ENCODE measurements at regions of chr18 and their contacts with region 1.

Region 1: DNA sequence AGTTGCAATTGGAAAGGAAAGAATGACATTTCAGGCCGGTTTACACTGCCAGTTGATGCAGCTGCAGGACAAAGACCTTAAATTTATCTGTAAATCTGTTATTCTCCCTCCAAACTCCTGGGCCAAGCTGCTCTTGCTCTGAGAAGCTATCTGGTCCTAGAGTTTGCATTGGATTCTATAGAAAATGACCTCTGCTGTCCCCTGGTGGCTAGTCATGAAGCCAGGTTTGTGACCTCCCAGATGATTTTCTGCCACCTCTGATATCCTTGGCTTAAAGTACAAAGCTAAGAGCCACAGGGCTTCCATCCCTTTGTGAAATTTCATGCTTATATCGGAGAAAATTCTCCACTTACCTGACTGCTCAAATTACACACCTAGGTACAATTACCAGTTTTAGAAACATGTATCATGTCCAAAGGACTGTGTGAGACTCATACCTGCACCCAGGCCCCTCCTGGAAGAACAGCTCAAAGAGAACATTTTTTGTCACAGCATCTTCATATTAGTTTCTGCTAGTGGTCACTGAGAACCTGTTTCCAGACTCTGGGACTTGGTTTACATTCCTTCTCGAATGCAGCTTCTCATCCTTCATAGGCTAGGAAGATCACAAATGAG is 28.9 kb upstream of the IER3IP1 start:
- DNase-seq: peak; percentile 29
- H3K4me3 Mint-ChIP-seq: no peak overlapping the region
- H3K27ac Mint-ChIP-seq: no peak overlapping the region
- H3K4me1 Mint-ChIP-seq: no peaks in the 10 kb centered on the region
- H3K27me3 Mint-ChIP-seq: peaks cover 16% of the 10 kb centered on the region

Region 2: GRCh38 chr18:46711444-46711863 is 493.6 kb before region 1 on chr18:
- CTCF ChIA-PET with region 1: no interaction called
- POLR2A ChIA-PET with region 1: no interaction called
- DNase-seq: no peak
- H3K4me3 Mint-ChIP-seq: no peak overlapping the region
- H3K27ac Mint-ChIP-seq: no peak overlapping the region
- H3K4me1 Mint-ChIP-seq: no peaks in the 10 kb centered on the region
- H3K27me3 Mint-ChIP-seq: peaks cover 4% of the 10 kb centered on the region

Region 3: GRCh38 chr18:47100214-47100831 is 104.7 kb before region 1 on chr18:
- CTCF ChIA-PET with region 1: interaction called, 22 read pairs
- POLR2A ChIA-PET with region 1: no interaction called
- DNase-seq: peak; percentile 61
- H3K4me3 Mint-ChIP-seq: no peak overlapping the region
- H3K27ac Mint-ChIP-seq: no peak overlapping the region
- H3K4me1 Mint-ChIP-seq: no peaks in the 10 kb centered on the region
- H3K27me3 Mint-ChIP-seq: no peaks in the 10 kb centered on the region

Region 4: DNA sequence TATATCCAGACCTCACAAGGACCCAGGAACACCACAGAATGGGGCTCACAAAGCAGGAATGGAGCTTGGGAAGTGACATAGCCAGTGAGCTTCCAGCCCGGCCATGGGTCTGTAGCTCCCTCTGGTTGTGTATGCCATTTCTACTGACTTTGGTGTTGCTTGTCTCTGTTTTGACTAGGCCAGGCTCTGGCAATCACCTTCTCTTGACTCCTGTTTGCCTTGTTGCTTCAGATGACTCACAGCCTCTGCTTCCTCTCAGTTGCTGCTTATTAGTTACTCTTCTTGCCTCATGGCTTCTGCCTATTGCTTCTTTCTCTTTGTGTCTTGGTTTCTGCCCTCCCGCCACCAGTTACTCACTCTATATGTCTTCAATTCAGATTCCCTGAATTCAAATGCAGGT is 13.1 kb before region 1 on chr18:
- CTCF ChIA-PET with region 1: interaction called, 13 read pairs
- POLR2A ChIA-PET with region 1: no interaction called
- DNase-seq: no peak
- H3K4me3 Mint-ChIP-seq: no peak overlapping the region
- H3K27ac Mint-ChIP-seq: no peak overlapping the region
- H3K4me1 Mint-ChIP-seq: no peaks in the 10 kb centered on the region
- H3K27me3 Mint-ChIP-seq: peaks cover 31% of the 10 kb centered on the region

Measured in activated CD4-positive, alpha-beta memory T cell treated with anti-CD3 and anti-CD28 coated beads, Interleukin-2, amount 10 ng/mL, durations not matched to agents 7 days and 5 days (primary cell).